ENCODE measurements at regions of chr12 and their contacts with region 1.

Region 1: DNA sequence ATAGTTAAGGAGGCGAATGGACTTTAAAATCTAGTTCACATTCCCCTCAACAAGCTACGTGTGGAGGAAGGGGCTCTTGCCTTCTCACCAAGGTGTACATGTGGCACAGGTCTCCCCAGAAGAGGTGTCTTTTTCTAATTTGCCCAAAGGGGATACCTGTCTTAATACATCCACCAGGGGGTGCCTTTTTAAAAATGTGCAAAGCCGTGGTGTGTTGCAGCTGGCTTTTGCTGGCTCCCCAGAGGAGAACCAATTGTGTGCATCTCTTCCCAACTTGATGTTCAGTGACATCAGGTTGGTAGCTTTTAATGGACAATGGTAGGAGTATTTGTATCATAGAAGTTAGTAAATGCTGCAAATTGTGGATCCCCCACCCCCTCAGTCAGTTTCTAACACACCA is 33.8 kb downstream of the CREBL2 start:
- DNase-seq: peak; percentile 52 to 70 (median 65)
- H3K4me3 ChIP-seq: no peak overlapping the region
- H3K4me3 Mint-ChIP-seq: no peak overlapping the region
- H3K27ac ChIP-seq: no peak overlapping the region
- H3K27ac Mint-ChIP-seq: peak overlapping the region in 5 of 7 donors; percentile 36 to 77 (median 55)
- H3K4me1 ChIP-seq: no peaks in the 10 kb centered on the region
- H3K4me1 Mint-ChIP-seq: peaks cover 6 to 11% (median 7%) of the 10 kb centered on the region in 4 donors
- H3K27me3 ChIP-seq: no peaks in the 10 kb centered on the region
- H3K27me3 Mint-ChIP-seq: no peaks in the 10 kb centered on the region

Region 2: GRCh38 chr12:12630850-12631249 is 14.6 kb before region 1 on chr12:
- CTCF ChIA-PET with region 1: interaction called, 14 read pairs
- POLR2A ChIA-PET with region 1: interaction called, 3 read pairs
- intact Hi-C with region 1: no loop called
- DNase-seq: no peak
- H3K4me3 ChIP-seq: no peak overlapping the region
- H3K4me3 Mint-ChIP-seq: peak overlapping the region in 7 of 8 donors; percentile 29 to 75 (median 55)
- H3K27ac ChIP-seq: no peak overlapping the region
- H3K27ac Mint-ChIP-seq: peak overlapping the region in 6 of 7 donors; percentile 7 to 86 (median 52)
- H3K4me1 ChIP-seq: peaks cover 56% of the 10 kb centered on the region
- H3K4me1 Mint-ChIP-seq: peaks cover 43 to 72% (median 61%) of the 10 kb centered on the region in 4 donors
- H3K27me3 ChIP-seq: no peaks in the 10 kb centered on the region
- H3K27me3 Mint-ChIP-seq: no peaks in the 10 kb centered on the region

Region 3: GRCh38 chr12:12696562-12697383 is 51.3 kb after region 1 on chr12:
- CTCF ChIA-PET with region 1: interaction called, 7 read pairs
- POLR2A ChIA-PET with region 1: interaction called, 4 read pairs
- intact Hi-C with region 1: loop called (anchors 2 kb)
- DNase-seq: peak; percentile 93 to 96 (median 95)
- H3K4me3 ChIP-seq: peak overlapping the region; percentile 37 to 74
- H3K4me3 Mint-ChIP-seq: peak overlapping the region; percentile 86 to 97 (median 94)
- H3K27ac ChIP-seq: peak overlapping the region; percentile 87
- H3K27ac Mint-ChIP-seq: peak overlapping the region; percentile 98 to 100 (median 100)
- H3K4me1 ChIP-seq: peaks cover 24% of the 10 kb centered on the region
- H3K4me1 Mint-ChIP-seq: peaks cover 16 to 41% (median 30%) of the 10 kb centered on the region in 4 donors
- H3K27me3 ChIP-seq: no peaks in the 10 kb centered on the region
- H3K27me3 Mint-ChIP-seq: no peaks in the 10 kb centered on the region

Region 4: GRCh38 chr12:12704593-12705230 is 59.2 kb after region 1 on chr12:
- CTCF ChIA-PET with region 1: interaction called, 6 read pairs
- POLR2A ChIA-PET with region 1: no interaction called
- intact Hi-C with region 1: loop called (anchors 1 kb)
- DNase-seq: peak in 4 of 5 donors; percentile 36 to 58 (median 48)
- H3K4me3 ChIP-seq: no peak overlapping the region
- H3K4me3 Mint-ChIP-seq: peak overlapping the region in 6 of 8 donors; percentile 2 to 84 (median 36)
- H3K27ac ChIP-seq: no peak overlapping the region
- H3K27ac Mint-ChIP-seq: peak overlapping the region in 5 of 7 donors; percentile 50 to 88 (median 73)
- H3K4me1 ChIP-seq: peaks cover 37% of the 10 kb centered on the region
- H3K4me1 Mint-ChIP-seq: peaks cover 14 to 32% (median 20%) of the 10 kb centered on the region in 4 donors
- H3K27me3 ChIP-seq: no peaks in the 10 kb centered on the region
- H3K27me3 Mint-ChIP-seq: no peaks in the 10 kb centered on the region